ENCODE measurements at regions of chr11 and their contacts with region 1.

Region 1: GRCh38 chr11:117426269-117426685 is 98.6 kb downstream of the CEP164 start:
- DNase-seq: peak; percentile 63 to 75 (median 64)
- ATAC-seq: peak; percentile 67 to 85 (median 80)
- H3K4me3 ChIP-seq: no peak overlapping the region
- H3K27ac ChIP-seq: no peak overlapping the region
- H3K4me1 ChIP-seq: no peaks in the 10 kb centered on the region
- H3K27me3 ChIP-seq: no peaks in the 10 kb centered on the region
- CTCF ChIP-seq: peak; percentile 74 to 93 (median 92)
- POLR2A ChIP-seq: no peak

Region 2: DNA sequence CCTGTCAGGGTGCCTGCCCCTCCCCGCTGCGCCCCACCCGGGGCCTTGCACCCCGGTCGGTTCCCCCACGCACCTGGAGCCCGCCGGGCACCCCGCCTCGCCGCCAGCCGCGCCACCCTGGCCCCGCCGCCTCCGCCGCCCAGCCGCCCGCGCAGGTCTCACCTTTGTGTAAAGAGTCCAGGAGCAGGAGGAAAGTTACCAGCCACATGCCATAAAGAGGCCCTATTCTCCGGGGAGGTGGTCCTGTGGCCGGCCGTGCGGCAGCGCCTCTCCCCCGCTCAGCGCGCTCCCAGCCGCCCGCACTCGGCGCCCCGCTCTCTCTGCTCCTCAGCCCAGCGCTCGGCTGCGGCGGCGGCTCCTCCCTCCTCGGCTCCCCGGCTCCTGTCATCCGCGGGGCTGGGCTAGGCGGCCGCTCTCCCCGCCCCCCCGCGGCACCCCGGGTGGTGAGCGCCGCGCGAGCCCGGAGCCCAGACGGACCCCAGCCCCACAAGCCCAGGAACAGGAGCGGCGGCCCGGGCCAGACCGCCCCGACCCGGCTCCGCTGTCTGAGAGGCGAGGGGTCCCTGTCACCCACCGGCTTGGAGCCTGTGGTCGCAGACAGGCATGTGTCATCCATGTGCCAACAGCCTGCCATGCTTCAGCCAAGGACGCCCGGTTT is 370.7 kb after region 1 on chr11 and contains the start of gene DSCAML1:
- intact Hi-C with region 1: loop called (anchors 10 kb)
- DNase-seq: no peak
- ATAC-seq: peak; percentile 32 to 51 (median 38)
- H3K4me3 ChIP-seq: no peak within 1 kb of the TSS
- H3K27ac ChIP-seq: no peak within 1 kb of the TSS
- H3K4me1 ChIP-seq: peaks cover 0 to 15% (median 0%) of the 10 kb centered on the region in 4 donors
- H3K27me3 ChIP-seq: peaks cover 0 to 16% of the 10 kb centered on the region in 2 donors
- CTCF ChIP-seq: no peak
- POLR2A ChIP-seq: no peak
- total RNA-seq, gene DSCAML1: 0.06 to 0.92 (median 0.22) TPM in 5 of 6 experiments, not detected in the other